ENCODE measurements at regions of chr19 and their contacts with region 1.

Region 1: GRCh38 chr19:57406516-57407123 is 4.3 kb upstream of the ZNF17 start:
- DNase-seq: peak; percentile 79
- H3K4me3 ChIP-seq: no peak overlapping the region
- H3K27ac ChIP-seq: no peak overlapping the region
- H3K4me1 ChIP-seq: peaks cover 0 to 7% of the 10 kb centered on the region in 2 experiments; a peak in 1 of 4 replicates
- H3K27me3 ChIP-seq: no peaks in the 10 kb centered on the region
- CTCF ChIP-seq: peak; percentile 67
- EP300 ChIP-seq: no peak
- RAD21 ChIP-seq: peak; percentile 86

Region 2: DNA sequence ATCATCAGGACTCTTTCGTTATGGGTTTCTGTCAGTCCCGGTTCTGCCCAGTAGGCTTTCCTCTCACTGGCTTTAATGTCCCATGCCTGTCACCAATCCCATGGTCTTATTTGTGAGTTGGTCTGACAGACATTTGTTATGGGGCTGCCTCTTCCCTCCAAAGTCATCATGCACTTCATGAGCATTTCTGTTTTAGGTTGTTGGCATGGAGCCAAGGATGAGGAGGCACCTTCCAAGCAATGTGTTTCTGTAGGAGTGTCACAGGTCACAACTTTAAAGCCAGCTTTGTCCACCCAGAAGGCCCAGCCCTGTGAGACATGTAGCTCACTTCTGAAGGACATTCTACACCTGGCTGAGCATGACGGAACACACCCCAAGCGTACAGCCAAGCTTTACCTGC is 12.8 kb after region 1 on chr19:
- CTCF ChIA-PET with region 1: interaction called, 11 read pairs
- POLR2A ChIA-PET with region 1: no interaction called
- DNase-seq: no peak
- H3K4me3 ChIP-seq: no peak overlapping the region
- H3K27ac ChIP-seq: no peak overlapping the region
- H3K4me1 ChIP-seq: no peaks in the 10 kb centered on the region
- H3K27me3 ChIP-seq: no peaks in the 10 kb centered on the region
- CTCF ChIP-seq: no peak
- EP300 ChIP-seq: no peak
- RAD21 ChIP-seq: no peak

Region 3: GRCh38 chr19:57477191-57478008 is 70.8 kb after region 1 on chr19 and contains the start of gene ZNF772:
- CTCF ChIA-PET with region 1: no interaction called
- POLR2A ChIA-PET with region 1: no interaction called
- DNase-seq: peak; percentile 88
- H3K4me3 ChIP-seq: peak within 1 kb of the TSS; percentile 55 to 60
- H3K27ac ChIP-seq: peak within 1 kb of the TSS in 1 of 2 experiments; percentile 53; a peak in 2 of 4 replicates
- H3K4me1 ChIP-seq: no peaks in the 10 kb centered on the region; a peak in 1 of 4 replicates
- H3K27me3 ChIP-seq: no peaks in the 10 kb centered on the region
- CTCF ChIP-seq: peak; percentile 54
- EP300 ChIP-seq: no peak
- RAD21 ChIP-seq: no peak
- polyA plus RNA-seq, gene ZNF772: 0.99 and 1.2 TPM in 2 replicates

Measured in SK-N-SH (cell line).